Activated CD8-positive, alpha-beta T cell treated with anti-CD3 and anti-CD28 coated beads, Interleukin-2, amount 10 ng/mL, durations not matched to agents 7 days and 5 days (primary cell): ENCODE measurements at regions of chr22 and their contacts with region 1.

Region 1: GRCh38 chr22:32265882-32266767 is 11.0 kb upstream of the SLC5A4 start:
- DNase-seq: peak; percentile 81
- ATAC-seq: peak; percentile 70
- H3K4me3 Mint-ChIP-seq: no peak overlapping the region
- H3K27ac Mint-ChIP-seq: no peak overlapping the region
- H3K4me1 Mint-ChIP-seq: no peaks in the 10 kb centered on the region
- H3K27me3 Mint-ChIP-seq: peaks cover 9% of the 10 kb centered on the region

Region 2: GRCh38 chr22:31970490-31971444 is 295.4 kb before region 1 on chr22:
- CTCF ChIA-PET with region 1: interaction called, 10 read pairs
- POLR2A ChIA-PET with region 1: no interaction called
- DNase-seq: peak; percentile 86
- ATAC-seq: peak; percentile 95
- H3K4me3 Mint-ChIP-seq: peak overlapping the region; percentile 75
- H3K27ac Mint-ChIP-seq: peak overlapping the region; percentile 8
- H3K4me1 Mint-ChIP-seq: peaks cover 15% of the 10 kb centered on the region
- H3K27me3 Mint-ChIP-seq: no peaks in the 10 kb centered on the region

Region 3: GRCh38 chr22:31977141-31977841 is 288.8 kb before region 1 on chr22:
- CTCF ChIA-PET with region 1: interaction called, 22 read pairs
- POLR2A ChIA-PET with region 1: no interaction called
- DNase-seq: peak; percentile 86
- ATAC-seq: peak; percentile 89
- H3K4me3 Mint-ChIP-seq: no peak overlapping the region
- H3K27ac Mint-ChIP-seq: no peak overlapping the region
- H3K4me1 Mint-ChIP-seq: peaks cover 3% of the 10 kb centered on the region
- H3K27me3 Mint-ChIP-seq: peaks cover 5% of the 10 kb centered on the region

Region 4: GRCh38 chr22:32103658-32104315 is 162.3 kb before region 1 on chr22:
- CTCF ChIA-PET with region 1: interaction called, 11 read pairs
- POLR2A ChIA-PET with region 1: no interaction called
- DNase-seq: no peak
- ATAC-seq: no peak
- H3K4me3 Mint-ChIP-seq: no peak overlapping the region
- H3K27ac Mint-ChIP-seq: no peak overlapping the region
- H3K4me1 Mint-ChIP-seq: no peaks in the 10 kb centered on the region
- H3K27me3 Mint-ChIP-seq: peaks cover 28% of the 10 kb centered on the region

Region 5: DNA sequence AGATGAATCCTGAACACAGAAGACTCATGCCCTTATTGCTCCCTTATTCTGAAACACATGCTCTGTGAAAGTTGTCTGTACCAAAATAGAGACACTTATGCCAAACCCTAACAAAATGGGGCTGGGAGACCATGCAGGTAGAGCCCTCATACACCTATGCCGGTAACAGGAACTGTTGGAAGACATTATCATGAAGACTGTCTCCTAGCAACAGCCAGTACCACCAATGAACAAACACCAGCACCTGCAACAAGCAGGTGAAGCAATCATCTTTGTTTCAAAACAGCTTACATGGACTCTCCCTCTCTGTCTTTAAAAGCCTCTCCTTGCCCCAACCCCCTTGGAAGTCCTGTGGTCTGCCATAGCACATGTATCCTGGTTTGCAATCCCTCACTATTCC is 28.2 kb before region 1 on chr22:
- CTCF ChIA-PET with region 1: interaction called, 12 read pairs
- POLR2A ChIA-PET with region 1: no interaction called
- DNase-seq: no peak
- ATAC-seq: no peak
- H3K4me3 Mint-ChIP-seq: no peak overlapping the region
- H3K27ac Mint-ChIP-seq: no peak overlapping the region
- H3K4me1 Mint-ChIP-seq: no peaks in the 10 kb centered on the region
- H3K27me3 Mint-ChIP-seq: peaks cover 43% of the 10 kb centered on the region

Region 6: DNA sequence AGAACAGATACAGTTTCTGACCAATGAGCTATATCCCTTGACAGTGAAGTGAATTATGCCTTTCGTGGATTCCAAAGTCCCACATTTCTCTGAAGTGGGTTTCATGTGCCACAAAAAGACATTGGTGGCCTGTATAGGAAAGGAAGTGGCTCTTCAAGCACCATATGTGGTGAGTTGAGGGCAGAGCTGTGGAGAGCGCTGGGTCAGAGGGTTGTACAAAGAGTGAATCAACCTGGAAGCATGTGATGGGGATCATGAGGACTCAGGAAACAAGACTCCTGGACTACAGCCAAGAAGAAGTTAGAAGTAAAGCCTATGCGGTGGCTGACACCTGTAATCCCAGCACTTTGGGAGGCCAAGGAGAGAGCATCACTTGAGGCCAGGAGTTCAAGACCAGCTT is 10.4 kb before region 1 on chr22:
- CTCF ChIA-PET with region 1: interaction called, 11 read pairs
- POLR2A ChIA-PET with region 1: no interaction called
- DNase-seq: peak; percentile 39
- ATAC-seq: no peak
- H3K4me3 Mint-ChIP-seq: no peak overlapping the region
- H3K27ac Mint-ChIP-seq: no peak overlapping the region
- H3K4me1 Mint-ChIP-seq: peaks cover 6% of the 10 kb centered on the region
- H3K27me3 Mint-ChIP-seq: peaks cover 48% of the 10 kb centered on the region

Region 7: DNA sequence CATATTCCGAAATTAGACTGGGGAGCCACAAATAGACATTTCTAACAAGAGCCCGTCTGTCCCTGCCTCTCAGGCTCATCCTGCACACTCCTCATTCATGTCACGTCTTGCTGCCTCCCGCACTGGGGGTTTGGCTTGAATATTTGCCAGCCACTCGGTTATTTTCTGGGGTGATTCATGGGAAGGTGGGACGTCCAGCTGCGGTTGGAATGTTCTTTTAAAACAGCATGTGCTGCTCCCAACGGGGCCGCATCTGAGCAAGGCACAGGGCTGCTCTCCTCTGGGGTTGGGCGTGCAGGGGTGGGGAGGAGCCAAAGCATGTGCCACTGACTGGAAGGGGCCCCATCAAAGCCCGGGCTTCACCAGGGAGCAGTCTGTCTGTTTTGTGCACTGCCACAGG is 14.9 kb after region 1 on chr22:
- CTCF ChIA-PET with region 1: interaction called, 18 read pairs
- POLR2A ChIA-PET with region 1: no interaction called
- DNase-seq: no peak
- ATAC-seq: no peak
- H3K4me3 Mint-ChIP-seq: no peak overlapping the region
- H3K27ac Mint-ChIP-seq: no peak overlapping the region
- H3K4me1 Mint-ChIP-seq: no peaks in the 10 kb centered on the region
- H3K27me3 Mint-ChIP-seq: peaks cover 7% of the 10 kb centered on the region